Left cardiac atrium (tissue), 4 donors: ENCODE measurements at regions of chr17 and their contacts with region 1.

Region 1: DNA sequence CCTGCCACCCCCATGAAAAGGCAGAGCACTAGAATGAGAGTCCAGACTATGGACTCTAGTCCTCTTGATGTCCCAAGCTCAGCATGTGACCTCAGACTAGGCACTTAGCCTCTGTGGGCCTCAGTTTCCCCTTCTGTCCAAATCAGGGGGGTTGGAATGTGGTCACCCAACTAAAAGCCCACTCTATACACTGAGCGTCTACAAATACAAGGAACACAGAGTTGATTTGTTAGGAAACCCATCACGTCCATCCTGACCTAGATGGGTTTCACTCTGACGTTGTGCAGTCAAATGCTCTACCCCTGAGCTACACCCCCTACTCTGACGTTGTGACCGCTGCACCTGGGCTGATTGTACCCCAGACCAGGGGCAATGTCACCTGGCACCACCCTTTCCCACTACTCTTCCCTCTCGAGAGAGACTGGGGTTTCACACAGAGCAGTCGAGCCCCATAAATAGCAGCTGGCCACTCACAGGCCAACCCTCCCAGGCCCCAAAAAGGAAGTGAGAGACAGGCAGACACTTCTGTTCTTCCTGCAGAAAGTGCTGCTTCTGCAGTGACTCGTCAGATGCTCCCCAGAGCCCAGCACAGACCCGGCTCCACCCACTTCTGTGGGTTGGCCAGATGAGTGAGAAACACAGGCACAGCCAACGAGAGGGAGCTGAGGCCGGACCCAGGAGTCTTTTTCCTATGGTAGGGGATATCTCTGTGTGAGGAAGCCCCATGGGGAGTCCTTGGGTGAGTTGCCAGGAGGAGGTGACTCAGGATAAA is 16.1 kb upstream of the TNFRSF13B start:
- DNase-seq: peak; percentile 71
- ATAC-seq: peak; percentile 87 to 88

Region 2: GRCh38 chr17:16915752-16916556 is 72.1 kb before region 1 on chr17:
- intact Hi-C with region 1: loop called in 1 of 2 experiments (anchors 10 kb)
- DNase-seq: no peak
- ATAC-seq: peak in 1 of 2 donors; percentile 49